Right cardiac atrium (tissue), 5 donors: ENCODE measurements at regions of chr19 and their contacts with region 1.

Region 1: GRCh38 chr19:43575156-43575950 is at the starts of genes PINLYP and XRCC1:
- DNase-seq: peak; percentile 99
- ATAC-seq: peak; percentile 99
- H3K4me3 ChIP-seq: peak within 1 kb of the TSS; percentile 78
- H3K27ac ChIP-seq: peak within 1 kb of the TSS; percentile 59
- H3K4me1 ChIP-seq: peaks cover 1% of the 10 kb centered on the region
- H3K27me3 ChIP-seq: no peaks in the 10 kb centered on the region
- total RNA-seq, gene PINLYP: 3.8 to 6.8 (median 4.9) TPM
- total RNA-seq, gene XRCC1: 13.5 to 17.1 (median 15.6) TPM

Region 2: DNA sequence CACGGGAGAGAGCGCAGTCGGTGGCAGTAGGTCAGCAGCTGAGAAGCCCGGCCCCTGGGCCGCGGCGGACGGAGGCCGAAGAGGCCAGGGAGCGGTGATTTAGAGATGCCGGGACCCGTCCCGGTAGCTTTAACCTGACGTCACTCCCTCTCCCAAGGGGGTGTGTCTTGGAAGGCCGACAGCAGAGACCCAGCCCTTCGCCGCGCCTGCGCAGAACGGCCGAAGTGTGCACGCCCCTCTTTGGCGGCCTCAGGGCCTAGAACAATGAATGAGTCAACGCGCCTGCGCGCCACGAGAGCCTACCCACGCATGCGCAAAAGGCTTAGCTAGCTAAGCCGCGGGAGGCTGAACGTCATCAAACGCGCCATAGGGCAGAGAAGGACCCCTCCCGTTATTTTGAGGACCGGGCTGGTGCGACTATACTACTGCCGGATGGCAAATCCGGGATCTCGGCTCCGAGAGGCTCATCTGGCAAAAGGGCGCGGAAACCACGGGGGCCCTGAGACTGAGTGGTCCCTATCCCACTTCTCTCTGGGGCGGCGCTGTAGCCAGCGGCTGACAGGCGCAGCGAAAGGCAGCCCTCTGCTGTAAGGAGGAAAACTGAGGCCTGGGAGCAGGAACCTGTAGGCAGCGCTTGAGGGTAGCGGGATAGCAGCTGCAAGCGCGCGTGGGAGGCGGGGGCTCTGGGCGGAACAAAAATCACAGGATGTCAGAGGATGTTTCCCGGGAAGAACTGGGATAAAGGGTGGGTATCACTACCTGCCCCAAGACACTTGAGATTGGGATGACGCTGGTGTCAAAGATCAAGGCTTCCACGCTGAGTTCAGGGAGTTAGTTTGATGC is 20.9 kb after region 1 on chr19 and contains the starts of genes IRGQ and ZNF576:
- intact Hi-C with region 1: loop called in 1 of 4 experiments (anchors 2 kb)
- DNase-seq: peak; percentile 100
- ATAC-seq: peak; percentile 93 to 95
- H3K4me3 ChIP-seq: peak within 1 kb of the TSS; percentile 82
- H3K27ac ChIP-seq: peak within 1 kb of the TSS; percentile 100
- H3K4me1 ChIP-seq: peaks cover 6% of the 10 kb centered on the region
- H3K27me3 ChIP-seq: no peaks in the 10 kb centered on the region
- total RNA-seq, gene IRGQ: 19.4 to 29.2 (median 24.7) TPM
- total RNA-seq, gene ZNF576: 11.5 to 15.4 (median 13.0) TPM

Region 3: DNA sequence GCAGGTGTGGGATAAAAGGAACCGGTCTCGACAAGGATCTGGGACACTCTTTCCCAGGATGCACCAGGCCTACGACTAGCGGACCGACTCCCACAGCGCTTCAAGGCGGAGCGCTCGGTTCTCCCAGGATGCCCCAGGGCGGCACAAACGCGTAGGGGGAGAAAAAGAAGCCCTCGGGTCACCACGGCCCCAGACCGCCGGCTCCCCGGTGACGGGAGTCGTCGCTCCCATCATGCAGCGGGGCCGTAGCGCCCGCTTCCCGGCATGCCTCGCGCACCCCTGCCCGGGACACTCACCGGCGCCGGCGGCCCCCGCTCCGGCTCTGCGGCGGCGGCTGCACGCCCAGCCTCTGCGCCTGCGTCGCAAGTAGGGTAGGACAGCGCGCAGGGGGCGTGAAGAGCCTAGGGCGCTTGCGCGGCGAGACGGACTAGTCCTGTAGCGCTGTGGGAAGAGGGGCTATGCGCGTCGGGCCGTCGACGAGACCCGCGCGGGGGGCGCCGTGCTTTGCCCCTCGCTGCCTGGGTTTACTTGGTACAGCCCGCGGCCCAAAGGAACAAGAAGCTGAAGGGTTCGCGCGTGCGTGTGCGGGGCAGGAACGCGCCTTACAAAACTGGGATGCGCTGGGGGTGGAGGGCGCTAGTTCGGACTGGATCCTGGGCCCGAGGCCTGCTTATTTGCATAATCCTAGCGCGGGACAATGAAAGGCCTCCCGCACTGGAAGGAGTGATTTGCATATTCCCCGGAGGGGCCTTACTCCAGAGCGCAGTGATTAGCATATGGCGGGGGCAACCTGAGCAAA is 44.1 kb after region 1 on chr19 and contains the start of gene ZNF428:
- intact Hi-C with region 1: no loop called
- DNase-seq: peak; percentile 92 to 96 (median 95)
- ATAC-seq: peak; percentile 96
- H3K4me3 ChIP-seq: peak within 1 kb of the TSS; percentile 51
- H3K27ac ChIP-seq: peak within 1 kb of the TSS; percentile 69
- H3K4me1 ChIP-seq: no peaks in the 10 kb centered on the region
- H3K27me3 ChIP-seq: no peaks in the 10 kb centered on the region
- total RNA-seq, gene ZNF428: 41.4 to 50.6 (median 45.7) TPM